Activated T-helper 2 cell treated with anti-CD3 and anti-CD28 coated beads, Interferon-gamma antibody, Interleukin-2, Interleukin-4, amounts not matched to agents 10 μg/mL and 5 μg/mL and 100 μg/mL, durations not matched to agents 14 hours and 24 hours and 36 hours (primary cell): ENCODE measurements at regions of chr10 and their contacts with region 1.

Region 1: DNA sequence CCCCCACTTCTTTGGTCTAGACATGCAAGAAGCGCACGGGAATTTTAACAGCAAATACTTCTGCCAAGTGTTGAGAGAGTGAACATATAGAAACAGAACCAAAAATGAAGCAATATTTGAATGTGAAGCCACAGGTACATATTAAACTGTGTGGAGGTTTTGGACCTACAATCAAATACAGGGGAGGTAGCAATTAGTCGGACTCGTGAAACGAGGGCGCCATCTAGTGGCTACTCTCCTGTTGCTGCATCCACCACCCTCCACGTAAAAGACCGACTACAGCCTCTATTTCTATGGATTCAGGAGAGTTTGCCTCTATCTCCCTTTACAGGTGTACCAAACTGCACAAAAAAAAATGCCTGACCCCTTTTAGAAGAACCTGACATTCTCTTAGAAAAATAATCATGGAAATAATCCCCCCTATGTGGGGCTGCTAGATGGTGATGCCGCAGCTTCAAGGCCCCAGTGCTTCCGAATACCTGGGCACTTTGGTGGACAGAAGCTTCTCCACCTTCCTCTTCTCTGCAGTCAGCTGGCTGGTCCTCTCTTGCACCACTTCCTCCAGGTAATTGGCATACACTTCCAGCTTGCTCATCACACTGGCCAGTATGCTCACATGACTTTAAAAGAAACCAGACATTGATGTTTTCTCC is 31.7 kb downstream of the TECTB start:
- DNase-seq: peak; percentile 48
- H3K4me3 Mint-ChIP-seq: no peak overlapping the region
- H3K27ac Mint-ChIP-seq: no peak overlapping the region
- H3K4me1 Mint-ChIP-seq: peaks cover 5% of the 10 kb centered on the region
- H3K27me3 Mint-ChIP-seq: peaks cover 36% of the 10 kb centered on the region

Region 2: DNA sequence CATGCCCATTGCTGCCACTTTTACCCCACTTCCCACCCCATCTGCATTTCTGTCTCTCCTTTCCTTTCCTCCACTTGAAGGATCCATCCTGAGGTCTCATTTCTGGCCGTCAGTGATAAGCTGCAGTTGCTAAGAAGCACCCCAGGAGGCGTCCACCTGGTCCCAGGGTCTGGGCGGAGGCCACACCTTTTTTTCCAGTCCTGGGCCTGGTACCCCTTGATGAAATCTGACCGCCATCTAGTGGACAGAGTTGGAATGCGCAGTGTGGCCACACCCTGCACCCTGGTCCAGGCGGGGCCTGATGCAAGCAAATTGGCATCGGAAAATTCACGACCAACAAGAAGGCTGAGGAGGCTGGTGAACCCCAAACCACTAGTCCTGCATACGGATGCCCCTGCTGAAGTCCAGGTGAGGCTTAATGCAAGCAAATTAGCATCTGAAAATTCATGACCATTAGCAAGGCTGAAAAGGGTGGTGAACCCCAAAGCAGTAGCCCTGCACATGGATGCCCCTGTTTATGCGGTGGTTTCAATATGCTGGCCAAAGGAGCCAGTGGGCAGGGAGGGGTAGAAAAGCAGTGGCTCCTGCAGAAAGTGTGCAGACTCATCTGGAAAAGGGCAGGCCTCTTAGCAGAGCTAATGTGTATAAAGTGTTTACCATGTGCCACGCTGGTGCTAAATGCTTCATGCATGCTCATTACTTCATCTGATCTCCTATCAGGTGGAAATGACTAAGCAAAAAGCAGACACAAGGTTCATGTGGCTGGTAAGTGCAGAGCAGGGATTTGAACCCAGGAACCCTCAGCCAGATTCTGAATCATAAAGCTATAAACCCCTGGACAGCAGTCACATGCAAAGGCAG is 174.6 kb before region 1 on chr10:
- intact Hi-C with region 1: loop called (anchors 10 kb)
- DNase-seq: peak; percentile 65
- H3K4me3 Mint-ChIP-seq: no peak overlapping the region
- H3K27ac Mint-ChIP-seq: no peak overlapping the region
- H3K4me1 Mint-ChIP-seq: no peaks in the 10 kb centered on the region
- H3K27me3 Mint-ChIP-seq: peaks cover 2% of the 10 kb centered on the region

Region 3: DNA sequence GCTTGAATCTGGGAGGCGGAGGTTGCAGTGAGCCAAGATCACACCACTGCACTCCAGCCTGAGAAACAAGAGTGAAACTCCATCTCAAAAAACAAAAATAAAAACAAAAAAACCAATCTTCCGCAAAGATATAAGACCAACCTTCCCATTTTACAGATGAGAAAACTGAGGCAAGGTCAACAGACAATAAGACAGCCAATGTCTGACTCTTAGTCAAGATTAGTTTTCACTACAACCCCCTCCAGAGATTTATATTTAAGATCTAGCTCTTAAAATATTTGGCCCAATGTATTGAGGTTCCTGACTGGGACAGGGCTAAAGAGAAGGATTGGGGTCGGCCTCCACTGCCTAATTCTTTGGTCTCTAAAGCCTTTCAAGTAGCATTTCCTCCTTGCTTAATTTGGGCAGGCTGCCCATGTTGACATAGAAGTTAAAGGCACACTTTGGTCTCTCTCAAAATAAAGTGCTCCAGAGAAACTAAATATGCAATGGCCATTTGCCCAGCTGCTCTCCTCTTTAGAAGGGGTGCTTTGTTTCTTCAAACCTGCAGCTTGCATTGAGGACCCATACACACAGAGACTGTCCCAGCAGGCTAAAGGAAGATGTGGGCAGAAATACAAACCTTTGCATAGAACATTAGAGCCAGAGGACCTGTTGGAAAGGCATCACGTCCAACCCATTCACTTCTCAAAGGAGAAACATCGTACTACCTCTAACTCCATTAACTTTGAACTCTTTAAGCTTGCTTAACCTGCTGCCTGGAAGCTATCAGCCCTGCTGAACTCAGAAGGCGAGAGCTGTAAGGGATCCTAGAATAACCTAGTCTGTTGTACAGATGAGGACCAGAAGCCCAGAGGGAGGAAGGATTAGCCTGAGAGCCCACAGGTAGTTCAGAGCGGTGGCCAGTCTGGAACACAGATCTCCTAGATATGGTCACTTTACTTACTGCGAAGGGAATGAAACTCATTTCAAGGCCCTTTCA is 27.8 kb before region 1 on chr10:
- intact Hi-C with region 1: no loop called
- DNase-seq: no peak
- H3K4me3 Mint-ChIP-seq: no peak overlapping the region
- H3K27ac Mint-ChIP-seq: no peak overlapping the region
- H3K4me1 Mint-ChIP-seq: no peaks in the 10 kb centered on the region
- H3K27me3 Mint-ChIP-seq: peaks cover 2% of the 10 kb centered on the region

Region 4: GRCh38 chr10:112383325-112383724 is 68.4 kb after region 1 on chr10:
- intact Hi-C with region 1: no loop called
- DNase-seq: no peak
- H3K4me3 Mint-ChIP-seq: no peak overlapping the region
- H3K27ac Mint-ChIP-seq: peak overlapping the region; percentile 17
- H3K4me1 Mint-ChIP-seq: peaks cover 54% of the 10 kb centered on the region
- H3K27me3 Mint-ChIP-seq: no peaks in the 10 kb centered on the region

Region 5: DNA sequence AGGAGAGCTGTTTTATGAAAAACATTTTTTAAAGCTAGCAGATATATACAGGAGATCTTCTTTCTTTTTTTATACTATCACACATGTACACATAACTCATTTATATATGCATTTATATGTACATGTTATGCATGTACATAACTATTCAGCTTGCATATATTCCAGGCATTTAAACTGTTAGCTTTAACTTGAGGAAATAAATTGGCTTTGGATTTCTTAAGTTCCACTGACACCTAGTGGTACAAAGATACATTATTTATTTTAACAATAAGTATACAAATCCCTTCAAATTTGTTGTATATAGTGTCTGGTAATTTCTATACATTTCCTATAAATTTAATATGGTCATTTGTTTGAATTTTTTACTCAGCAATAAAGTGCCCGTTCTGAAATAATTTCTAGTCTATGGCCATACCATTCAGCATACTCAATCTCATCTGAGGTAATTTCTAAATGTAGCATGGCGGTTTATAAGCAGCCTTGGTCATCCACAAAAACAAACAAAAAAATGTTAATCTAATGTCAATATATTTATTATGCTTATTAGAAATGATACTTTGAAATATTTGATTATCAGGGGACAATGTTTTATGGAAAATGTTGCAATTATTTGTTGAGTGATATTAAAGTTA is 120.2 kb after region 1 on chr10:
- intact Hi-C with region 1: loop called (anchors 2 kb)
- DNase-seq: no peak
- H3K4me3 Mint-ChIP-seq: no peak overlapping the region
- H3K27ac Mint-ChIP-seq: no peak overlapping the region
- H3K4me1 Mint-ChIP-seq: no peaks in the 10 kb centered on the region
- H3K27me3 Mint-ChIP-seq: no peaks in the 10 kb centered on the region